ENCODE measurements at regions of chr12 and their contacts with region 1.

Region 1: DNA sequence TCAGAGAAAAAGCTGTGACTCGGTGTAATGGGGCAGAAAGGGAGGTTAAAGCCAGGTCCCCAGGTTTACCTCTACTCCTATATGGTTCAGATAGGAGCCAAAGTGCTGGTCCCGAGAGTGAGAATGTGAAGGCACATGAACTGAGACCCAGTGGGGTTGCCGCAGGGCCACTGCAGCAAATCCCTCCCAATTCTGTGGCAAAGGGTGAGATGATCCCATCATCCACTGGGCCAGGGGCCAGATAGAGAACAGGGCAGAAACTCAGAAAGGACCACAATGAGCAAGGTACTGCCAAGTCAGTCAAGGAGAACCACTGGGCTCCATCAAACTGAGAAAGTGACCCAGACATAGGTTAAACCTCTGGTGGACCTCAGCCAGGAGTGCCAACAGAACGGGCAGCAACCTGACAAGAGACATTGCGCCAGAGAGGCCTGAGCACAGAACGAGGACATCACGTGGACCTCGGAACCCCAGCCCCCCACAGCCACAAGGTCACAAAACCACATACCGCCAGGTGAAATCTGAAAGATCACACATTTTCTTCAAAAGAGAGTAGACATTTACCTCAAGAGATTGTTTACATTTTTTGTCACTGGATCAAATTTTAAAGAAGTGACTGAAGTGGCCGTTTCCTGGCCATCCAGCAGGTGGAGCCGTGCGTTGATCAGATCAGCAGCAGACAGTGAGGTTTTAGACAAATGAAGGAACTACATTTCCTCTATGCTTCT is 20.5 kb upstream of the ITPR2 start:
- DNase-seq: peak; percentile 74
- H3K4me3 ChIP-seq: no peak overlapping the region
- H3K27ac ChIP-seq: no peak overlapping the region
- H3K4me1 ChIP-seq: peaks cover 32% of the 10 kb centered on the region
- H3K27me3 ChIP-seq: no peaks in the 10 kb centered on the region
- CTCF ChIP-seq: peak; percentile 77 to 94
- POLR2A ChIP-seq: no peak

Region 2: DNA sequence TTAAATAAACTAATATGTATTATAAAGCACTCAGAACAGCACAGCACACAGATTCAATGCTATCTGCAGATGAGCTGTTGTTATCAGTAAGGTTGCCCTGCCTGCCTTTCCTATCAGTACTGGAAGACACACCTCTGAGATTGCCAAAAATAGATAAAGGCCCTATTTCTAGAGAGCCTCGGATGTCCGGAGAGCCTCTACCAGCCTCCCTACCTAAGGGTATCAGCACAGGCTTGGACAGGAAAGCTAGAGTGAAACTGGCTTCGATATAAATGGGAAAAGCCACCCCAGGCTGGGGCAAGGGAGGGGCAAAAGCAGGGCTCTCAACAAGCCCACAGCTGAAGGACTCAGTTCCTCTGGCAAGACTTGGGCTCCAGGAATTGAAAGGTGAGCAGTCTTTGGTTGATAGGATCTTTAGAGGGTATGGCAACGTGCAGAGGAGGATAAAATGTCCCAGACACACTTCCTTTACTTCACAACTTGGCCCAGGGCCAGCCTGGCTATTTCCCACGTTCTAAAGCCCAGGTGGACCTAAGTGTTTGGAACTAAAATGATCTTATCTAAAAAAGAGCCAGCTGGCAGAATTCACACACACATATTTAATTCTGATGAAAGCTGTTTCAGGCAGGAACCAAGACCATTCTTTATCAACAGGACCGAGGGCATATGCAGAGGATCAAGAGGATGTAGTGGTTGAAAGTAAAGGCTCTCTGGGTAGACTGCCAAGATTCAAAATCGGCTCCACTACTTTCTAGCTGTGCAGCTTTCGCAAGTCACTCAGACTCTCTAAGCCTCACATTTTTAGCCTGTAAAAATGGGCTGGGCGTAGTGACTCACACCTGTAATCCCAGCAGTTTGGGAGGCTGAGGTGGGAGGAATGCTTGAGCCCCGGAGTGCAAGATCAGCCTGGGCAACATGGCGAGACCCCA is 17.3 kb after region 1 on chr12:
- CTCF ChIA-PET with region 1: interaction called, 16 read pairs
- POLR2A ChIA-PET with region 1: interaction called, 3 read pairs
- dilution Hi-C with region 1: no loop called
- intact Hi-C with region 1: loop called (anchors 1 kb)
- DNase-seq: peak; percentile 96
- H3K4me3 ChIP-seq: no peak overlapping the region
- H3K27ac ChIP-seq: peak overlapping the region; percentile 47
- H3K4me1 ChIP-seq: peaks cover 16% of the 10 kb centered on the region
- H3K27me3 ChIP-seq: no peaks in the 10 kb centered on the region
- CTCF ChIP-seq: no peak
- POLR2A ChIP-seq: no peak

Region 3: GRCh38 chr12:26878661-26879119 is 25.2 kb after region 1 on chr12:
- CTCF ChIA-PET with region 1: interaction called, 57 read pairs
- POLR2A ChIA-PET with region 1: interaction called, 3 read pairs
- dilution Hi-C with region 1: no loop called
- intact Hi-C with region 1: loop called (anchors 1 kb)
- DNase-seq: peak; percentile 93
- H3K4me3 ChIP-seq: no peak overlapping the region
- H3K27ac ChIP-seq: no peak overlapping the region
- H3K4me1 ChIP-seq: peaks cover 9% of the 10 kb centered on the region
- H3K27me3 ChIP-seq: no peaks in the 10 kb centered on the region
- CTCF ChIP-seq: no peak
- POLR2A ChIP-seq: no peak